Left ventricle myocardium inferior (tissue), 1 donor: ENCODE measurements at regions of chr15 and their contacts with region 1.

Region 1: GRCh38 chr15:67458331-67459029 is 62.5 kb upstream of the C15orf61 start:
- DNase-seq: no peak
- H3K4me3 ChIP-seq: no peak overlapping the region
- H3K27ac ChIP-seq: no peak overlapping the region
- H3K4me1 ChIP-seq: no peaks in the 10 kb centered on the region
- H3K27me3 ChIP-seq: no peaks in the 10 kb centered on the region
- CTCF ChIP-seq: no peak

Region 2: GRCh38 chr15:67383899-67384298 is 74.6 kb before region 1 on chr15:
- intact Hi-C with region 1: no loop called
- DNase-seq: no peak
- H3K4me3 ChIP-seq: no peak overlapping the region
- H3K27ac ChIP-seq: no peak overlapping the region
- H3K4me1 ChIP-seq: no peaks in the 10 kb centered on the region
- H3K27me3 ChIP-seq: no peaks in the 10 kb centered on the region
- CTCF ChIP-seq: no peak

Region 3: DNA sequence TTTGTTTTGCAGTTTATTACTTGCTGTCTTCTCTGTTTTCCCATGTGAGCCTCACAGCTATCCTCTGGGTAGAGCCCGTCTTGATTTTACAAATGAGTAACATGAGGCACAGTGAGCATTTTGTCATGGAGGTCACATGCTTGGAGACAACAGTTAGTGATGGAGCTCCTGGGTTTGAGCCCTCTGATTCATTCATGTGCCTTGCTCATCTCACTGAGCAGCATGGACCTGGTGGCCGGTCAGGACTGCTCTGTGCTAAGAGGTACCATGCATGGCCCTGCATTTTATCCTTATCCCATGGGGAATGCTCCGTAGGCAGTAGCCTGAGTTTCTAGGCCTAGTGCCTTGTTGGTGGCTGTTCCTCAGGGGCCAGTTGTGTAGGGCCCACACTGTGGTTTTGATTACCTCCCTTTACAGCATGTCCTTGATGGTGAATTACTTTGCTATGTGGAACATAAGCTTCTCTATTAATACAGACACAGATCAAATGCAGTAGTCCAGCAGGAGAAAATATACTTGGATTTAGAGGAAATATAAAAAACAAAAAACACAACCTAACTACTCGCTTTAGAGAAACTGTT is 119.6 kb after region 1 on chr15:
- intact Hi-C with region 1: no loop called
- DNase-seq: no peak
- H3K4me3 ChIP-seq: no peak overlapping the region
- H3K27ac ChIP-seq: no peak overlapping the region
- H3K4me1 ChIP-seq: no peaks in the 10 kb centered on the region
- H3K27me3 ChIP-seq: no peaks in the 10 kb centered on the region
- CTCF ChIP-seq: no peak

Region 4: GRCh38 chr15:67836477-67836876 is 378.0 kb after region 1 on chr15:
- intact Hi-C with region 1: loop called (anchors 2 kb)
- DNase-seq: peak; percentile 40
- H3K4me3 ChIP-seq: peak overlapping the region; percentile 61
- H3K27ac ChIP-seq: no peak overlapping the region
- H3K4me1 ChIP-seq: peaks cover 71% of the 10 kb centered on the region
- H3K27me3 ChIP-seq: peaks cover 47% of the 10 kb centered on the region
- CTCF ChIP-seq: peak; percentile 91